Natural killer cell (primary cell): ENCODE measurements at regions of chr1 and their contacts with region 1.

Region 1: GRCh38 chr1:244325056-244325764 is 126.5 kb downstream of the ADSS2 start:
- DNase-seq: peak; percentile 45 to 65
- ATAC-seq: peak; percentile 77 to 93 (median 88)
- H3K4me3 ChIP-seq: peak overlapping the region; percentile 61
- H3K4me3 Mint-ChIP-seq: peak overlapping the region; percentile 95
- H3K27ac ChIP-seq: peak overlapping the region; percentile 91
- H3K27ac Mint-ChIP-seq: peak overlapping the region; percentile 96 to 98
- H3K4me1 ChIP-seq: peaks cover 56% of the 10 kb centered on the region
- H3K4me1 Mint-ChIP-seq: peaks cover 56 to 57% of the 10 kb centered on the region in 2 donors
- H3K27me3 ChIP-seq: no peaks in the 10 kb centered on the region
- H3K27me3 Mint-ChIP-seq: no peaks in the 10 kb centered on the region
- CTCF ChIP-seq: no peak

Region 2: GRCh38 chr1:244302889-244303613 is 22.2 kb before region 1 on chr1:
- intact Hi-C with region 1: loop called (anchors 1 kb)
- DNase-seq: no peak
- ATAC-seq: no peak
- H3K4me3 ChIP-seq: no peak overlapping the region
- H3K4me3 Mint-ChIP-seq: no peak overlapping the region
- H3K27ac ChIP-seq: no peak overlapping the region
- H3K27ac Mint-ChIP-seq: peak overlapping the region; percentile 2 to 23
- H3K4me1 ChIP-seq: peaks cover 15% of the 10 kb centered on the region
- H3K4me1 Mint-ChIP-seq: peaks cover 28 to 46% of the 10 kb centered on the region in 2 donors
- H3K27me3 ChIP-seq: no peaks in the 10 kb centered on the region
- H3K27me3 Mint-ChIP-seq: no peaks in the 10 kb centered on the region
- CTCF ChIP-seq: no peak

Region 3: GRCh38 chr1:244381878-244382565 is 56.8 kb after region 1 on chr1:
- intact Hi-C with region 1: no loop called
- DNase-seq: no peak
- ATAC-seq: no peak
- H3K4me3 ChIP-seq: no peak overlapping the region
- H3K4me3 Mint-ChIP-seq: no peak overlapping the region
- H3K27ac ChIP-seq: no peak overlapping the region
- H3K27ac Mint-ChIP-seq: no peak overlapping the region
- H3K4me1 ChIP-seq: no peaks in the 10 kb centered on the region
- H3K4me1 Mint-ChIP-seq: no peaks in the 10 kb centered on the region
- H3K27me3 ChIP-seq: no peaks in the 10 kb centered on the region
- H3K27me3 Mint-ChIP-seq: no peaks in the 10 kb centered on the region
- CTCF ChIP-seq: no peak

Region 4: GRCh38 chr1:244451951-244452795 is 127.0 kb after region 1 on chr1:
- intact Hi-C with region 1: loop called (anchors 1 kb)
- DNase-seq: peak; percentile 98 to 100
- ATAC-seq: peak; percentile 85 to 96 (median 90)
- H3K4me3 ChIP-seq: peak overlapping the region; percentile 72
- H3K4me3 Mint-ChIP-seq: peak overlapping the region; percentile 80
- H3K27ac ChIP-seq: peak overlapping the region; percentile 92
- H3K27ac Mint-ChIP-seq: peak overlapping the region; percentile 85 to 88
- H3K4me1 ChIP-seq: peaks cover 9% of the 10 kb centered on the region
- H3K4me1 Mint-ChIP-seq: peaks cover 33 to 37% of the 10 kb centered on the region in 2 donors
- H3K27me3 ChIP-seq: no peaks in the 10 kb centered on the region
- H3K27me3 Mint-ChIP-seq: no peaks in the 10 kb centered on the region
- CTCF ChIP-seq: peak; percentile 31

Region 5: DNA sequence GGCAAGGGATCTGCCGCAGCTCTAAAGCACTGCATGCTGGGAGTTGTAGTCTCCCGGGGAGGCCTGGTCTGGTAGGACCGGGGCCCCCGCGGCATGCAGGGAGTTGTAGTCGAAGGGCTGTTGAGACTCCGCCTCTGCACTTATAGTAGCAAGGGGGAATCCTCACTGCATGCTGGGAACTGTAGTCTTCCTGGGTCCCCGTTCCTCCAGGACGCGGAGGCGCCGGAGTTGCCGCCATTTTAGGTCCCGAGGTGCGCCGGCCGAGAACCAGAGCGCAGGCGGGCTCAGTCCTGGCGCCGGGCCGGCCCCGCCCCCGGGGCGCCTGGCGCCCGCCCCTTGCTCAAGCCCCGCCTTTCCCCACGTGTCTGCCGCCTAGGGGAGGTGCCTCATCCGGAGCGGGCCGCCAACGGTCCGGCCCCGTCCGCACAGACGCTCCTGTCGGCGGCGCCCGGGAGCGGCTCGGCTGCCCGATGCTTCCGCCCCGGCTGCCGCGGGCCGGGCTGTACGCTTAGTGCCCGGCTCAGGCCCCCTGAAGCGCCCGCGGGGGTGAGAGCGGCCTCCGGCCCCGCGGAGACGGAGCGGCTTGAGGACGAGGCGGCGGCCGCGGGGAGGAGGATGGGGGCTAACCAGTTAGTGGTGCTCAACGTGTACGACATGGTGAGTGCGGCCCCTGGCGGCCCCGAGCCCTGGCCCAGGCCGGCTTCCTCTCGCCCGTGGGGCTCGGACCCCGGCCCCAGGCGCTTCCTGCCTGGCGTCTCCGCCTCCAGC is 327.7 kb after region 1 on chr1 and contains the start of gene DESI2:
- intact Hi-C with region 1: loop called (anchors 2 kb)
- DNase-seq: peak; percentile 96 to 99
- ATAC-seq: peak; percentile 88 to 96 (median 88)
- H3K4me3 ChIP-seq: peak within 1 kb of the TSS; percentile 90
- H3K4me3 Mint-ChIP-seq: peak within 1 kb of the TSS; percentile 77
- H3K27ac ChIP-seq: peak within 1 kb of the TSS; percentile 76
- H3K27ac Mint-ChIP-seq: peak within 1 kb of the TSS in 1 of 2 donors; percentile 75
- H3K4me1 ChIP-seq: peaks cover 14% of the 10 kb centered on the region
- H3K4me1 Mint-ChIP-seq: peaks cover 19 to 22% of the 10 kb centered on the region in 2 donors
- H3K27me3 ChIP-seq: no peaks in the 10 kb centered on the region
- H3K27me3 Mint-ChIP-seq: peaks cover 0 to 4% of the 10 kb centered on the region in 2 donors
- CTCF ChIP-seq: peak; percentile 48
- total RNA-seq, gene DESI2: 24.1 to 30.5 (median 25.4) TPM